ENCODE measurements at regions of chr5 and their contacts with region 1.

Region 1: DNA sequence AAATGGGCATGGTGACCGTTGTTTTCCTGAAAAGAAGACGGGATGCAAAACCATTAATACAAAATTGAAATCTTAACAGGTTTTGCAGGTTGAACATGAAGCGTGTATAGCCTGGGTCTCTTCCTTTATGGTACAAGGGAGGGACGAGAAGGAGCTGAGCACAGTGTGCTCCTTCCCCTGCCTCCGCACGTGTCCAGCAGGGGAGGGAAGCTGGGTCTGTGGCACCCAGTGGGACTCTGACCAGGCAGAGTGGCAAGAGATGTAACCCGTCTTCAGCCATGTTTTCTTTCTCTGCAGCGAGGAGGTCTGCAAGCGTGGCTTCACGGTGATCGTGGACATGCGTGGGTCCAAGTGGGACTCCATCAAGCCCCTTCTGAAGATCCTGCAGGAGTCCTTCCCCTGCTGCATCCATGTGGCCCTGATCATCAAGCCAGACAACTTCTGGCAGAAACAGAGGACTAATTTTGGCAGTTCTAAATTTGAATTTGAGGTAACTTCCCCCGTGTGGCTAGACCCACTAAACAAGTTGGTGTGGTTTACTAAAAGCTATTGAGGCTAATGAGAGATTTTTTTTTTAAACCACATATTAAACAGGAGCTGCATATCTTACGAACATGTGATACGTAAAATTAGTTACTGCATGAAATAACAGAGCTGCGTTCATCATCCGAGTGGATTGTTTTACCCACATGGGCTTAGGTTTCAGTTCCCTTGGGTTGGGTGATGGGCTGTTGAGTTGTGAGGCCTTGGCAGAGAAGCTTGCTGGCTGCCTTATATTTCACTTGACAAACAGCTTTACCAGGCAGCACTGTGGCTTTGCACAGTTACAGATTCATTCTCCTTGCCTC is 143.7 kb downstream of the TRIO start:
- DNase-seq: no peak
- H3K4me3 ChIP-seq: no peak overlapping the region
- H3K27ac ChIP-seq: no peak overlapping the region
- H3K27me3 ChIP-seq: no peaks in the 10 kb centered on the region
- CTCF ChIP-seq: no peak

Region 2: GRCh38 chr5:13987843-13988464 is 298.8 kb before region 1 on chr5:
- in situ Hi-C with region 1: loop called (anchors 25 kb)
- DNase-seq: peak; percentile 71
- H3K4me3 ChIP-seq: no peak overlapping the region
- H3K27ac ChIP-seq: peak overlapping the region; percentile 9
- H3K27me3 ChIP-seq: no peaks in the 10 kb centered on the region
- CTCF ChIP-seq: peak; percentile 84

Region 3: DNA sequence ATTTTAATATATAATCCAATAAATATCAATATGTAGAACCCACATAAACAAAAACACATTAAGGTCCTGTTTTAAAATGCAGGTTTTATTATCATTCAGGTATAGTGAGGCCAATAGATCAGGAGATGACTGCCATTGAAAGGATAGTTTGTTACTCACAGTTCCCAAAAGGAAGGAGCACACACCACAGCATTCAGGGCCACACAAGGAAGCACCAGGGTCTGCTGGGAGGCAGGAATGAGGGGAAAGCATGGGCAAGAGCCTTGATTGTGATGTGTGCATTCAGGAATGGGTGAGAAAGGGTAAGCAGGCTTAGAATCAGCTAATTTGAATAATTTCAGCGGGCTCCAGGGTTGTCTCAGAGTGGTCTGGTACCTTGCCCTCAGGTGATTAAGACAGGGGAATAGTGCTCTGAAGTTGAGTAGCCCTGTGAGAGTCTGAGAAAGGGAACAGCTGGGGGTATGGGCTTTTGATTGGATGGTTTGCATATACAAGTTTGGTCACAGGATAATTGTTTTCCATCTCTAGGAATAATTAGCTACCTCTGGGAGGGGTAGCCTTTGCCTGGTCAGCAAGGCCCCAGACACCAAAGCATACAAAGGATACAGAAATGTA is 357.9 kb after region 1 on chr5:
- in situ Hi-C with region 1: no loop called
- DNase-seq: no peak
- H3K4me3 ChIP-seq: no peak overlapping the region
- H3K27ac ChIP-seq: no peak overlapping the region
- H3K27me3 ChIP-seq: peaks cover 3% of the 10 kb centered on the region
- CTCF ChIP-seq: no peak

Measured in brain microvascular endothelial cell (primary cell).